ENCODE measurements at regions of chr5 and their contacts with region 1.

Region 1: GRCh38 chr5:115841382-115842088 is at the starts of genes AP3S1 and ATG12:
- DNase-seq: peak; percentile 95
- H3K4me3 ChIP-seq: peak within 1 kb of the TSS; percentile 87 to 98 (median 94)
- H3K27ac ChIP-seq: peak within 1 kb of the TSS; percentile 95 to 99 (median 96)
- H3K4me1 ChIP-seq: peaks cover 0 to 59% (median 47%) of the 10 kb centered on the region in 4 donors
- H3K27me3 ChIP-seq: no peaks in the 10 kb centered on the region
- CTCF ChIP-seq: no peak
- EP300 ChIP-seq: no peak
- POLR2A ChIP-seq: peak; percentile 86 to 92
- total RNA-seq, gene AP3S1: 87.8 to 229 (median 119) TPM
- total RNA-seq, gene ATG12: 35.3 to 82.5 (median 56.0) TPM

Region 2: GRCh38 chr5:114782869-114783268 is 1058.7 kb before region 1 on chr5:
- intact Hi-C with region 1: no loop called
- DNase-seq: no peak
- H3K4me3 ChIP-seq: no peak overlapping the region
- H3K27ac ChIP-seq: no peak overlapping the region
- H3K4me1 ChIP-seq: no peaks in the 10 kb centered on the region
- H3K27me3 ChIP-seq: no peaks in the 10 kb centered on the region
- CTCF ChIP-seq: no peak
- EP300 ChIP-seq: no peak
- POLR2A ChIP-seq: no peak

Region 3: GRCh38 chr5:115296124-115297022 is 545.2 kb before region 1 on chr5 and contains the start of gene CCDC112:
- intact Hi-C with region 1: loop called (anchors 10 kb)
- DNase-seq: peak; percentile 89
- H3K4me3 ChIP-seq: peak within 1 kb of the TSS; percentile 72 to 91 (median 82)
- H3K27ac ChIP-seq: peak within 1 kb of the TSS; percentile 64 to 76 (median 69)
- H3K4me1 ChIP-seq: peaks cover 0 to 12% (median 6%) of the 10 kb centered on the region in 4 donors
- H3K27me3 ChIP-seq: no peaks in the 10 kb centered on the region
- CTCF ChIP-seq: no peak
- EP300 ChIP-seq: no peak
- POLR2A ChIP-seq: peak in 1 of 2 donors; percentile 12
- total RNA-seq, gene CCDC112: 4.6 to 19.4 (median 12.6) TPM

Region 4: GRCh38 chr5:115544436-115545350 is 296.8 kb before region 1 on chr5 and contains the start of gene FEM1C:
- intact Hi-C with region 1: loop called (anchors 5 kb)
- DNase-seq: peak; percentile 99
- H3K4me3 ChIP-seq: peak within 1 kb of the TSS; percentile 72 to 98 (median 87)
- H3K27ac ChIP-seq: peak within 1 kb of the TSS; percentile 97 to 99 (median 98)
- H3K4me1 ChIP-seq: peaks cover 0 to 33% (median 21%) of the 10 kb centered on the region in 4 donors
- H3K27me3 ChIP-seq: no peaks in the 10 kb centered on the region
- CTCF ChIP-seq: no peak
- EP300 ChIP-seq: peak in 1 of 4 donors; percentile 27
- POLR2A ChIP-seq: peak; percentile 98 to 99
- total RNA-seq, gene FEM1C: 18.8 to 26.8 (median 26.6) TPM

Region 5: GRCh38 chr5:115625579-115626444 is 215.7 kb before region 1 on chr5 and contains the start of gene TMED7:
- intact Hi-C with region 1: loop called (anchors 2 kb)
- DNase-seq: peak; percentile 100
- H3K4me3 ChIP-seq: peak within 1 kb of the TSS; percentile 76 to 97 (median 90)
- H3K27ac ChIP-seq: peak within 1 kb of the TSS; percentile 91 to 97 (median 95)
- H3K4me1 ChIP-seq: peaks cover 0 to 46% (median 36%) of the 10 kb centered on the region in 4 donors
- H3K27me3 ChIP-seq: no peaks in the 10 kb centered on the region
- CTCF ChIP-seq: no peak
- EP300 ChIP-seq: peak in 1 of 4 donors; percentile 50
- POLR2A ChIP-seq: peak; percentile 65 to 79
- total RNA-seq, gene TMED7: 80.8 to 104 (median 88.2) TPM

Region 6: DNA sequence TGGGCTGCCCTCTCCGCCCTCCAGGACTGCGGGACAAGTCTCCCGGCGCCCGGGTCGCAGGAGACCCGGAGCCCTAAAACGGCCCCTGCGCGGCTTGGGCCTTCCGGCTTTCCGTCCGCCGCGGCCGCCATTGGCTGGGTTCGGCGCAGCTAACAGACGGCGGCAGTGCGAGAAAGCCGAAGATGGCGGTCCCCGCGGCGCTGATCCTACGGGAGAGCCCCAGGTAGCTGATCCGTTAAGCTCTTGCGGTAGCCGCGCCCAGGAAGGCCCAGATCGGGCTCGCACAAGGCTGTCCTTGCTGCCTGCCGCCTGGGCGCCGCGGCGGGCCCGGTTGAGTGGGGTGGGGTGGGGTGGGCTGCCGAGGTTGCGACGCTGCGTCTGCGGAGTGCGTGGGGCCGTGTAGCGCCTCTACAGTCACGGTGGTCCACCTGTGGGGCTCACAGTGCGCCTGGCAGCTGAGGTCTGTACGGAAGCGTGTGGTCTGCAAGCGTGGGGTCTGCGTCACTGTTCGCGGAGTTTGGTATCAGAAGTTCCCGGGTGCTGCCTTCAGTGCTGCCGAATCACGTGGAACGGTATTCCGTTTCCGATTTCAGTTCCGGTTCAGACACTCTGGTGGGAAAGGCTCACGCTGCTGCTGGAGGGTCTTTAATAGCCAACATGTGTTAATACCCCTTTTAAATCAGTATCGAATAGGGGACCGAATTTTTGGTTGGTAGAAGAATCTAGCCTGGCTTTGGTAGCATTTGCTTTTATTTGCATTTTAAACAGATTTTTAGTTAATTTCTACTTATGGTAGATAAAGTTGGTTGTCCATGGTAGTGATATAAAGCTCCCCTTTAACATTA is 243.6 kb after region 1 on chr5 and contains the start of gene COMMD10:
- intact Hi-C with region 1: loop called (anchors 5 kb)
- DNase-seq: peak; percentile 87
- H3K4me3 ChIP-seq: peak within 1 kb of the TSS; percentile 93 to 98 (median 96)
- H3K27ac ChIP-seq: peak within 1 kb of the TSS; percentile 92 to 96 (median 92)
- H3K4me1 ChIP-seq: peaks cover 0 to 20% (median 13%) of the 10 kb centered on the region in 4 donors
- H3K27me3 ChIP-seq: no peaks in the 10 kb centered on the region
- CTCF ChIP-seq: no peak
- EP300 ChIP-seq: peak in 1 of 4 donors; percentile 2
- POLR2A ChIP-seq: peak; percentile 31 to 35
- total RNA-seq, gene COMMD10: 27.3 to 47.7 (median 41.3) TPM